ENCODE measurements at regions of chrX and their contacts with region 1.

Region 1: DNA sequence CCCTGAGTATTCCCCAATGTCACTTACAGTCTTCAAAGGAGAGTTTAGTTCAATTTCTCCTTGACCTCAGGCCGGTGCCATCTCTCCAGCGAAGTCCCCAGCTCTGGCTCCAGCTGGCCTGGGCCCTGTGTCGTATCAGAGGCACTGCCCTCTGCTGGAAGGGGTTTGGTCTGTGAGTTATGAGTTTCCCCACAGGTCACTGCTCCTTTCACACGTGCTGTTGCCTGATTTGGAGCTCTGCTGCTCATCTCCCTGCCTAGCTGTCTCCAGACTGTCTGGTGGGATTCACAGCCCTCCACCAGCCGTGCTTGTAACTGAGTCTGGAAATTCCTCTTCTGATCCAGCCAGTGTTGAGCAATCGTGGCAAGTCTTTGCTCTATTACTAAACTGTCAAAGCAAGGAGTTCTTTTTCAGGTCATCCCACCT is at the start of gene RAP2C:
- DNase-seq: peak; percentile 75 to 82
- ATAC-seq: peak; percentile 77 to 81
- H3K4me3 ChIP-seq: peak within 1 kb of the TSS; percentile 89
- H3K27ac ChIP-seq: peak within 1 kb of the TSS; percentile 98 to 100
- H3K4me1 ChIP-seq: peaks cover 11% of the 10 kb centered on the region; the same call in 2 of the 3 replicates
- CTCF ChIP-seq: peak; percentile 52
- EP300 ChIP-seq: no peak
- POLR2A ChIP-seq: no peak
- RAD21 ChIP-seq: peak; percentile 44 to 51; a peak in 4 of 5 replicates
- polyA plus RNA-seq, gene RAP2C: 26.2 and 27.2 TPM in 2 replicates

Region 2: GRCh38 chrX:132092439-132093065 is 126.8 kb before region 1 on chrX:
- CTCF ChIA-PET with region 1: interaction called, 13 read pairs
- POLR2A ChIA-PET with region 1: interaction called, 5 read pairs
- DNase-seq: peak; percentile 36 to 64
- ATAC-seq: peak; percentile 77 to 86; a peak in 4 of 6 replicates
- H3K4me3 ChIP-seq: no peak overlapping the region
- H3K27ac ChIP-seq: no peak overlapping the region
- H3K4me1 ChIP-seq: no peaks in the 10 kb centered on the region
- CTCF ChIP-seq: peak; percentile 51
- EP300 ChIP-seq: no peak
- POLR2A ChIP-seq: no peak
- RAD21 ChIP-seq: peak; percentile 45 to 55